Heart right ventricle (tissue), 16 donors: ENCODE measurements at regions of chr19 and their contacts with region 1.

Region 1: DNA sequence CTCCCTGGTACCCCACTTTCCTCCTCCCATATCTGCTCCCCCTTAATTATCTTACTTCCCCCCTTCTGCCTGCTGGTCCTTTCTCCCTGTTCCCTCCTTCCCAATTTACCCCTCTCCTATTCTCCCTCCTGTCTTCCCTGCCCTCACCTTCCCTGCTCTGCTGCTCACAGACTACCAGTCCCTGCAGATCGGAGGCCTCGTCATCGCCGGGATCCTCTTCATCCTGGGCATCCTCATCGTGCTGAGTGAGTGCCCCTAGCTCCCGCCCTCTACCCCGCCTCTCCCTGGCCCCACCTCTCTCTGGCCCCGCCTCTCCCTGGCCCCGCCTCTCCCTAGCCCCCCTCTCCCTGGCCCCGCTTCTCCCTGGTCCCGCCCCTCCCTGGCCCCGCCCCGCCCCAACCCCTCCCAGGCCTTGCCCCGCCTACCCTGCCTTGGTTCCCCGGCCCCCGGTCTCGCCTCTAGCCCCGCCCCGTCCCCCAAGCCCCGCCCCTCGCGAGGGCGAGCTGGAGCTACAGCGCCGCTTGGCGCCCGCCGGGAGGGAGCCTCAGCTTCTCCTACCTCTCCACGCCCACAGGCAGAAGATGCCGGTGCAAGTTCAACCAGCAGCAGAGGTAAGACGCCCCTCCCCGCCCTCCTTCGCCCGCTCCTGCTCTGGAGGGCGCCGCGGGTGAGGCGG is 2.0 kb upstream of the FXYD7 start:
- DNase-seq: peak; percentile 89 to 97
- ATAC-seq: peak; percentile 46 to 80 (median 64)
- H3K4me3 ChIP-seq: peak overlapping the region in 9 of 10 donors; percentile 26 to 63 (median 56)
- H3K27ac ChIP-seq: peak overlapping the region in 8 of 10 donors; percentile 87 to 99 (median 94)
- H3K4me1 ChIP-seq: peaks cover 3 to 71% (median 48%) of the 10 kb centered on the region in 9 donors
- H3K27me3 ChIP-seq: peaks cover 0 to 35% (median 4%) of the 10 kb centered on the region in 7 donors
- CTCF ChIP-seq: peak in 7 of 9 donors; percentile 29 to 59 (median 46)

Region 2: DNA sequence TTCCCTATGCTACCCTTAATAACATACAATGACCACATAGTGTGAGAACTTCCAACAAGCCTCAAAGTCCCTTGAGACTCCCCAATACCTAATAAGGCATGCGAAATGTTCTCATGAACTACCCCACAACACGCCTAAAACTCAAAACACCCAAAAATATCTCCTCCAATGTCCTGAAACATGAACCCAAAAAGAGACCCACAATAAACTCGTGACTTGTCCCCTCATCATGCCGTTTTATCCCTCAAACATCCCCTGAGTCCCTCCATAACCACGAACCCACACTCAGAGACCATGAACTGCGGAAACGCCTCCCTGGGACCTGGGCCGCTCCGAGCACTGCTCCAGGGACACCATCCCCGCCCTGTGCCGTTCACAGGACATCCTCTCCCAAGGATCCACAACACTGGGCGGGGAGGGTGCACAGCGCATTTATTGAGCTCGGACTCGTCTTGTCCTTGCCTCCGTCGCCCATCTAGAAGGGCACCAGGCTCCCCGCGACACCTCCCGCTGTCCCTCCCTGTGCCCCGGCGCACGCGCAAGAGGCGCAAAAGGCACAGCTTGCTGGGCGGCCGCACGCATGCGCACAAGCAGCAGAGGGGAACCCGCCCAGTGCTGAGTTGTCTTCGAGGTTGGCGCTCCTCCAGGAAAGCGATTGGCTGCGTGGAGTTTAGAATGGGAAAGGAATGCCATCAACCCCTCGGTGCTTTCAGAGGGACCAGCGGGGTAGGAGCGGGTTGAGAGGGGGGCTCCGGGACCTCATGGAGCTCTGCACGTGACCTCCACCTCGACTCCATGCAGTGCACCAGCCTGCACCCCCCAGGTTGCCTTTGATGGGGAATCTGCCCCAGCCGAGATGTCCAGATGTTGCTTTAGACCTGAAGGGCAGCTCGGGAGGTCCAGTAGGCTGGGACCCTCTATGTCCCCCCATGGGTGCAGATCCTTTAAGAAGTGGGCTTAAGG is 16.7 kb before region 1 on chr19:
- intact Hi-C with region 1: loop called in 1 of 10 experiments (anchors 2 kb)
- DNase-seq: peak; percentile 95 to 96
- ATAC-seq: peak; percentile 88 to 98 (median 95)
- H3K4me3 ChIP-seq: peak overlapping the region; percentile 29 to 75 (median 62)
- H3K27ac ChIP-seq: peak overlapping the region; percentile 61 to 96 (median 90)
- H3K4me1 ChIP-seq: peaks cover 5 to 46% (median 32%) of the 10 kb centered on the region in 9 donors
- H3K27me3 ChIP-seq: no peaks in the 10 kb centered on the region
- CTCF ChIP-seq: no peak